WTC11 (cell line): ENCODE measurements at regions of chr1 and their contacts with region 1.

Region 1: DNA sequence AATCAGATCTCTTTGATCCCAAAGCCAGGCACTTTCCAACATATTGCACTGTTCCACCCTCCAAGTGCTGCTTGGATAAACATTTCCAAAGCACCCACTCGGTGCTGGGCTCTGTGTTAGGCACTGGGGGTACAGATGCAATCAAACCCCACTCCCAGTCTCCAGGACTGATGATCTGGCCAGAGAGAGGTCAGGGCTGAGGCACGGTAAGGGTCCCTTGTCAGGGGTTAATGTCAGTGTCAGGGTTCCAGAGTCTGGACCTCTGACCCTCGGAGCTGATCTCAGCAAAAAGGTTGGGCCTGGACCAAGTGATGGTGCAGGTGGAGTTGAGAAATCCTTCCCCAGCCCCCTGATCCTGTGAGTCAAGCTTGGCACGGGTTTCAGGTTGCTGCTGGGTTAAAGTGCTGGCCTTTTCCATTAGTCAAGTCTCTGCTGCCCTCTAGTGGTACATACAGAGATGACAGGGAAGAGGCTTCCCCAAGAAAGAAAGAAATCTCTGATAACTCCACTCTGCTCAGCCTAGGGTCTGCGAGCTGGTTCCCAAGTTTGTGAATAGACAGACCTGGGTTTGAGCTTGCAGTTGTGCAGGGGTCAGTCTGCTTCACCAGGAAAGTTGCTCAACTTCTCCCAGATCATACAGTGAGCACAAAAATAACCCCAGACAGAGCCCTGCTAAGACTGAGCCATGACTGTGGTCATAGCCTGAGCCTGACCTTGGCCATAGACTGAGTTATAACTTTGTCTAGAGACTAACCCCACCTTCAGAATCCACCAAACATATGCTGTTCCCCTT is 74.6 kb downstream of the DMRTA2 start:
- DNase-seq: peak; percentile 63
- ATAC-seq: peak; percentile 88
- H3K4me3 Mint-ChIP-seq: no peak overlapping the region
- H3K27ac Mint-ChIP-seq: no peak overlapping the region
- H3K4me1 Mint-ChIP-seq: peaks cover 13% of the 10 kb centered on the region
- H3K27me3 Mint-ChIP-seq: peaks cover 13% of the 10 kb centered on the region
- CTCF ChIP-seq: peak; percentile 83

Region 2: GRCh38 chr1:50047916-50048694 is 300.5 kb before region 1 on chr1:
- CTCF ChIA-PET with region 1: interaction called, 11 read pairs
- POLR2A ChIA-PET with region 1: no interaction called
- DNase-seq: peak; percentile 91
- ATAC-seq: peak; percentile 94
- H3K4me3 Mint-ChIP-seq: peak overlapping the region; percentile 63
- H3K27ac Mint-ChIP-seq: no peak overlapping the region
- H3K4me1 Mint-ChIP-seq: peaks cover 16% of the 10 kb centered on the region
- H3K27me3 Mint-ChIP-seq: peaks cover 44% of the 10 kb centered on the region
- CTCF ChIP-seq: peak; percentile 68

Region 3: GRCh38 chr1:50271968-50272578 is 76.6 kb before region 1 on chr1:
- CTCF ChIA-PET with region 1: interaction called, 13 read pairs
- POLR2A ChIA-PET with region 1: no interaction called
- DNase-seq: peak; percentile 68
- ATAC-seq: peak; percentile 74
- H3K4me3 Mint-ChIP-seq: no peak overlapping the region
- H3K27ac Mint-ChIP-seq: no peak overlapping the region
- H3K4me1 Mint-ChIP-seq: peaks cover 38% of the 10 kb centered on the region
- H3K27me3 Mint-ChIP-seq: peaks cover 29% of the 10 kb centered on the region
- CTCF ChIP-seq: peak; percentile 61; the same call in 1 of the 2 replicates

Region 4: DNA sequence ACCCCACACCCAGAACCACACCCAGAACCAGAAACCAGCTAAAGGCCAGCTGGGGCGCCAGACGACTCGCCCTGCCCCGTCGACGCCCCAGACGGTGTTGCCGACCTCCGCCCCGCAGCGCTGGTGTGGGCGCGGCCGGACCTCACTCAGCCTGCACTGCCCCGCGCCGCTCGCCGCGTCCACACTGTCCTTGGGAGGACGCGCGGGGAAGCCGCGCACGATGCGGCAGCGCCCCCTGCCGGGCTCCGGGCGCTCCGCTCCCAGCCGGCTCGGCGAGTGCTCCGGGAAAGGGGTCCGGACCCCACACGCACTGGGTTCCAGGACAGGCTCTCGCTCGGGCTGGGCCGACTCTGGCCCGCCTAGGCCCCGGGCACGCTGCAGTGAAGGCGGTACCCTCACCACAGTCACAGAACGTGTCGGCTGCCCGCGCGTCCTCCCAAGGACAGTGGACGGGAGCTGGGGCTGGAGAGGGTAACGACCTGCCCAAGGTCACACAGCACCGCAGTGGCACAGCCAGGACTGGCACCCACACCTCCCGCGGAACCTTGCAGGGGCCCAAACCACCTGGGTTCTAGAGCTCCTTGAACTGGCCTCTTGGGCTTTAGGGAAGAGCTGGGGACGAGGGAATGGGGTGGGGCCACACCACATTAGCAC is 15.6 kb before region 1 on chr1:
- CTCF ChIA-PET with region 1: interaction called, 31 read pairs
- POLR2A ChIA-PET with region 1: no interaction called
- DNase-seq: peak; percentile 83
- ATAC-seq: peak; percentile 90
- H3K4me3 Mint-ChIP-seq: peak overlapping the region; percentile 63
- H3K27ac Mint-ChIP-seq: no peak overlapping the region
- H3K4me1 Mint-ChIP-seq: peaks cover 12% of the 10 kb centered on the region
- H3K27me3 Mint-ChIP-seq: peaks cover 55% of the 10 kb centered on the region
- CTCF ChIP-seq: peak; percentile 77

Region 5: GRCh38 chr1:50610563-50610962 is 261.9 kb after region 1 on chr1:
- CTCF ChIA-PET with region 1: no interaction called
- POLR2A ChIA-PET with region 1: no interaction called
- DNase-seq: no peak
- ATAC-seq: peak; percentile 58
- H3K4me3 Mint-ChIP-seq: peak overlapping the region; percentile 24
- H3K27ac Mint-ChIP-seq: peak overlapping the region; percentile 64
- H3K4me1 Mint-ChIP-seq: peaks cover 17% of the 10 kb centered on the region
- H3K27me3 Mint-ChIP-seq: no peaks in the 10 kb centered on the region
- CTCF ChIP-seq: no peak